ENCODE measurements at regions of chr14 and their contacts with region 1.

Region 1: DNA sequence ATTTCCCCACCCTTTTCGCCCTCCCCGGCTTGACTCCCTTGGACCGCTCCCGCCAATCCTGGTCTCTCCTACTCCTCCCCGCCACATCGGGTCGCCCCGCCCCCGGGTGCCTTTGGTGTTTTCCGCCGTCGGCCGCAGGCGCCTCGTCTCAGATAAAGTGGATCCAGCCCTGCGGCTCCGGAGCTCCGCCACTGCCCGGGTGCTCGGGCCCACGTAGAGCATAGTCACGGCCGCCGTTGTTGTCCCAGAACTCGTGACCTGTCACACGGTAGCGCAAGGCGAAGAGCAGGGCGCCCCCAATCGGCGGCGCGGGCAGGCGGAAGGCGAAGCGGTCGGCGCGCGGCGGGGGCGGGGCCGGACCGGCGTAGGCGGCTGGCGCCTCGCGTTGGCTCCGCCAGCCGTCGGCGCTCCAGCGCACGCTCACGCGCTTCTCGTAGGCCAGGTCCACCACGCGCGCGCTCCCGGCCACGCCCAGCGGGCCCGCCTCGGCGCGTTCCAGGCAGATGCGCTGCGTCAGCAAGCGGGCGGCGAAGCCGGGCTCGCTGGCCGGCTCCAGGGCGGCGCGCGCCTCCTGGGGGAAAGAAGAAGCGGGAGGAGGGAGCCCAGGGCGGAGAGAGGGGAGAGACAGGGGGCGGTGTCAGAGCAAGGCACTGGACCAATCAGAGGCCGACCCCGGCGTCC is 1.2 kb downstream of the PPP1R3E start:
- DNase-seq: peak; percentile 97
- H3K4me3 Mint-ChIP-seq: peak overlapping the region; percentile 95
- H3K27ac Mint-ChIP-seq: peak overlapping the region; percentile 97
- H3K4me1 Mint-ChIP-seq: peaks cover 25% of the 10 kb centered on the region
- H3K27me3 Mint-ChIP-seq: no peaks in the 10 kb centered on the region
- CTCF ChIP-seq: peak; percentile 79

Region 2: GRCh38 chr14:23258256-23258655 is 43.2 kb before region 1 on chr14:
- CTCF ChIA-PET with region 1: interaction called, 32 read pairs
- POLR2A ChIA-PET with region 1: interaction called, 16 read pairs
- intact Hi-C with region 1: no loop called
- DNase-seq: no peak
- H3K4me3 Mint-ChIP-seq: no peak overlapping the region
- H3K27ac Mint-ChIP-seq: no peak overlapping the region
- H3K4me1 Mint-ChIP-seq: no peaks in the 10 kb centered on the region
- H3K27me3 Mint-ChIP-seq: peaks cover 9% of the 10 kb centered on the region
- CTCF ChIP-seq: no peak

Region 3: GRCh38 chr14:23269193-23269592 is 32.2 kb before region 1 on chr14:
- CTCF ChIA-PET with region 1: interaction called, 32 read pairs
- POLR2A ChIA-PET with region 1: interaction called, 16 read pairs
- intact Hi-C with region 1: loop called (anchors 1 kb)
- DNase-seq: no peak
- H3K4me3 Mint-ChIP-seq: no peak overlapping the region
- H3K27ac Mint-ChIP-seq: no peak overlapping the region
- H3K4me1 Mint-ChIP-seq: no peaks in the 10 kb centered on the region
- H3K27me3 Mint-ChIP-seq: no peaks in the 10 kb centered on the region
- CTCF ChIP-seq: no peak

Region 4: GRCh38 chr14:23286020-23286905 is 15.2 kb before region 1 on chr14 and contains the start of gene HOMEZ:
- CTCF ChIA-PET with region 1: interaction called, 27 read pairs
- POLR2A ChIA-PET with region 1: interaction called, 60 read pairs
- intact Hi-C with region 1: no loop called
- DNase-seq: peak; percentile 98
- H3K4me3 Mint-ChIP-seq: peak within 1 kb of the TSS; percentile 97
- H3K27ac Mint-ChIP-seq: peak within 1 kb of the TSS; percentile 75
- H3K4me1 Mint-ChIP-seq: peaks cover 8% of the 10 kb centered on the region
- H3K27me3 Mint-ChIP-seq: no peaks in the 10 kb centered on the region
- CTCF ChIP-seq: no peak
- total RNA-seq, gene HOMEZ: 6.6 and 9.3 TPM in 2 replicates

Region 5: GRCh38 chr14:23320774-23321571 is 19.5 kb after region 1 on chr14 and contains the start of gene PABPN1:
- CTCF ChIA-PET with region 1: interaction called, 49 read pairs
- POLR2A ChIA-PET with region 1: interaction called, 339 read pairs
- intact Hi-C with region 1: loop called (anchors 1 kb)
- DNase-seq: peak; percentile 100
- H3K4me3 Mint-ChIP-seq: peak within 1 kb of the TSS; percentile 84
- H3K27ac Mint-ChIP-seq: peak within 1 kb of the TSS; percentile 97
- H3K4me1 Mint-ChIP-seq: peaks cover 11% of the 10 kb centered on the region
- H3K27me3 Mint-ChIP-seq: no peaks in the 10 kb centered on the region
- CTCF ChIP-seq: no peak
- total RNA-seq, gene PABPN1: 153 and 167 TPM in 2 replicates

Region 6: GRCh38 chr14:23327947-23328744 is 26.7 kb after region 1 on chr14:
- CTCF ChIA-PET with region 1: interaction called, 49 read pairs
- POLR2A ChIA-PET with region 1: interaction called, 339 read pairs
- intact Hi-C with region 1: no loop called
- DNase-seq: peak; percentile 78
- H3K4me3 Mint-ChIP-seq: no peak overlapping the region
- H3K27ac Mint-ChIP-seq: no peak overlapping the region
- H3K4me1 Mint-ChIP-seq: peaks cover 11% of the 10 kb centered on the region
- H3K27me3 Mint-ChIP-seq: no peaks in the 10 kb centered on the region
- CTCF ChIP-seq: peak; percentile 80

Region 7: GRCh38 chr14:23352511-23353432 is 51.3 kb after region 1 on chr14 and contains the start of gene SLC22A17:
- CTCF ChIA-PET with region 1: no interaction called
- POLR2A ChIA-PET with region 1: no interaction called
- intact Hi-C with region 1: no loop called
- DNase-seq: no peak
- H3K4me3 Mint-ChIP-seq: no peak within 1 kb of the TSS
- H3K27ac Mint-ChIP-seq: no peak within 1 kb of the TSS
- H3K4me1 Mint-ChIP-seq: no peaks in the 10 kb centered on the region
- H3K27me3 Mint-ChIP-seq: peaks cover 71% of the 10 kb centered on the region
- CTCF ChIP-seq: no peak
- total RNA-seq, gene SLC22A17: not detected in 2 replicates